Activated CD4-positive, alpha-beta memory T cell treated with anti-CD3 and anti-CD28 coated beads for 36 hours (primary cell): ENCODE measurements at regions of chr5 and their contacts with region 1.

Region 1: GRCh38 chr5:157148734-157149615 is 6.3 kb upstream of the MED7 start:
- DNase-seq: peak; percentile 87
- H3K4me3 Mint-ChIP-seq: peak overlapping the region; percentile 3
- H3K27ac Mint-ChIP-seq: peak overlapping the region; percentile 68
- H3K4me1 Mint-ChIP-seq: peaks cover 47% of the 10 kb centered on the region
- H3K27me3 Mint-ChIP-seq: no peaks in the 10 kb centered on the region

Region 2: GRCh38 chr5:157159209-157159751 is 10.3 kb after region 1 on chr5:
- CTCF ChIA-PET with region 1: interaction called, 17 read pairs
- POLR2A ChIA-PET with region 1: no interaction called
- intact Hi-C with region 1: no loop called
- DNase-seq: peak; percentile 70
- H3K4me3 Mint-ChIP-seq: peak overlapping the region; percentile 72
- H3K27ac Mint-ChIP-seq: peak overlapping the region; percentile 98
- H3K4me1 Mint-ChIP-seq: peaks cover 82% of the 10 kb centered on the region
- H3K27me3 Mint-ChIP-seq: no peaks in the 10 kb centered on the region

Region 3: DNA sequence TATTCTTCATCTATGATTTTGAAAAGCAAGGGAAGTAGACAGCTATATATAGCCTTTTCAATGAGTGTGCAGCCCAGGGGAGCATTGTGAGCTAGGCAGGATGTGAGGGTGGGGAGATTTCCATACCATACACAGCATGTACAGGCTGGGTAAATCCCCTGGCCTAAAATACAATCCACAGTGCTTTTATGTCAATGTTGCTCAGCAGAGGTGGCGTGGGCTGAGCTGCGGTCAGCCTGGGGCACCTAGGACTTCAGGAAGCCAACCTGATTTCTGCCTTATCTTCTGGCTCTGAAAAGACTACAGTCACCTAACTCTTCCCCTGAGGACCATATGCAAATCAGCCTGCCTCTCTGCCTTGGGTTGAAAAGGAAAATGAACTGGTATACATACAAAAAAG is 23.4 kb after region 1 on chr5:
- CTCF ChIA-PET with region 1: interaction called, 14 read pairs
- POLR2A ChIA-PET with region 1: interaction called, 25 read pairs
- intact Hi-C with region 1: loop called (anchors 1 kb)
- DNase-seq: peak; percentile 96
- H3K4me3 Mint-ChIP-seq: peak overlapping the region; percentile 68
- H3K27ac Mint-ChIP-seq: peak overlapping the region; percentile 95
- H3K4me1 Mint-ChIP-seq: peaks cover 83% of the 10 kb centered on the region
- H3K27me3 Mint-ChIP-seq: no peaks in the 10 kb centered on the region

Region 4: GRCh38 chr5:157189223-157189622 is 40.2 kb after region 1 on chr5:
- CTCF ChIA-PET with region 1: interaction called, 32 read pairs
- POLR2A ChIA-PET with region 1: interaction called, 76 read pairs
- intact Hi-C with region 1: no loop called
- DNase-seq: peak; percentile 76
- H3K4me3 Mint-ChIP-seq: peak overlapping the region; percentile 99
- H3K27ac Mint-ChIP-seq: peak overlapping the region; percentile 100
- H3K4me1 Mint-ChIP-seq: peaks cover 75% of the 10 kb centered on the region
- H3K27me3 Mint-ChIP-seq: no peaks in the 10 kb centered on the region

Region 5: DNA sequence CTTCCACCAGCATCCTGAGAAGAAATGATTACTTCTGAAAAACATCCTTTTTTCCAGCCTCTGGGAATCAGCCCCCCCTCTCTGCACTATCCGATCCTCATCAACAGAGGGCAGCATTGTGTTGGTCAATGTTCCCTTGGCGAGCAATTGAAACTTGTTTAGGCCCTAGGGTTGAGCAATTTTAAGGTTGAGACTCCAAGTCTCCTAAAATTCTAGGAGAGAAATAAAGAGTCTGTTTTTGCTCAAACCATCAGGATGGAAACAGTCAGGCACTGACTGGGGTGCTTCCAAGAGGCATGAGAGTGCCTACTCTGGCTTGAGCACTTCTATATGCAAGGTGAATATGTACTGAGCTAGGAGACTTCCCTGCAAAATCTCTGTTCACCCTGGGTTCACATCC is 104.6 kb after region 1 on chr5:
- CTCF ChIA-PET with region 1: interaction called, 26 read pairs
- POLR2A ChIA-PET with region 1: interaction called, 4 read pairs
- intact Hi-C with region 1: no loop called
- DNase-seq: no peak
- H3K4me3 Mint-ChIP-seq: peak overlapping the region; percentile 39
- H3K27ac Mint-ChIP-seq: peak overlapping the region; percentile 96
- H3K4me1 Mint-ChIP-seq: peaks cover 92% of the 10 kb centered on the region
- H3K27me3 Mint-ChIP-seq: no peaks in the 10 kb centered on the region

Region 6: DNA sequence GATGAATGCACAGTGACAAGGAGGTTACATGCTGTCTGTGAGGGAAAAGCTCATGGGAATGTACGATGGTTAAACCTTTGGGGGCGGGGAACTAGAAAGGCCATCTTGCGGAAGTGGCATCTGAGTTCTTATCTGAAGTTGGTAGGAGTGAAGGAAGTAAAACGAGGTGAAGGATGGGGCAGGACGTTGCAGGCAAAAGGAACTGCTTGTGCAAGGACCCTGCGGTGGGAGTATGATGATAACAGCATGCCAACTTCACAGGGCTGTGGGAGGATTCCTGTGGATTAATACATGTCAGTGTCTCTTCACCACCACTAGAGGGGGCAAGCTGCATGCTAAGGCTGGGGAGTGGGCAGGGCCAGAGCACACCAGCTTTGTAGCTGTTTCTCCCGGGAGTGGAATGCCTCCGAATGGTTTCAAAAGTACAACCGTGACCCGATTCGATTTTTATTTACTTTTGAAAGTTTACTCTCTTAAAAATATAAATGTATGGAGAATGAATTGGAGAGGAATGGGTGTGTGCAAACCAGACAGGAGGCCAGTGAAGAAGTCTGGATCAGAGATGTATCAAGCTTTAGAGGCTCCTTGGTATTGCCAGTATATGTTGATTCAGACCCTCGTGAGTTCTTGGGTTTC is 179.4 kb after region 1 on chr5:
- CTCF ChIA-PET with region 1: interaction called, 8 read pairs
- POLR2A ChIA-PET with region 1: no interaction called
- intact Hi-C with region 1: loop called (anchors 1 kb)
- DNase-seq: peak; percentile 71
- H3K4me3 Mint-ChIP-seq: no peak overlapping the region
- H3K27ac Mint-ChIP-seq: peak overlapping the region; percentile 23
- H3K4me1 Mint-ChIP-seq: peaks cover 40% of the 10 kb centered on the region
- H3K27me3 Mint-ChIP-seq: no peaks in the 10 kb centered on the region